ENCODE measurements at regions of chr17 and their contacts with region 1.

Region 1: DNA sequence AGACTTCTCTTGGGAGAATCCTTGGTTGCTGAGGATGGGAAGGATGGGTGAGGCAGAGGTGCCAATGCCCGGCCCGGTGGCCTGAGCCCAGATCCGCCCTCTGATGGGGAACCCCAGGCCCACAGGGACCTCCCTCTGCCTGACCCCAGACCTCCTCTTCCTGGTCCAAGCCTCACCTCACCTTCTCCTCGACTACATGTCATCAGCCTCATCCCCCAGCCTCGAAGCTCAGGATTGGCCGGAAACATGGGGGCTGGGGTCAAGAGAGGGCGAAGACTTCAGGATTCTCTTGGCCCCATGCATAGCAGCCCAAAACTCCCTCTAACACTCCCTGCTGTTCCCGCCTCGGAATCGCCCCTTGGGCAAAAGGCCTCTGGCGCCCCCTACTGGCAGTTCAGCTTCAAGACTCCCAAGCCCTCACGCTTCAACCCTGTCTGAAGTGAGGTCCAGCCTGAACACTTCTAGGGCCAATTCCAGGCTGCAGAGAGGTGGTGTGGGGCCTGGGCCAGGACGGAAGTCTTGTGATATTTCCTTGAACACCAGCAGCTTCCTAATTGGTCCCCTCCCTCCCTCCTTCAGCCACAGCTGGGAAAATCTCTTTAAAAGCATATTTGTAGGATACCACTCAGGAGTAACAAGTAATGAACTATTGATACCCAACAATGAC is 47.2 kb downstream of the ARHGAP27 start:
- DNase-seq: peak; percentile 93 to 95
- H3K4me3 ChIP-seq: no peak overlapping the region
- H3K27ac ChIP-seq: peak overlapping the region; percentile 12 to 68 (median 55)
- H3K4me1 ChIP-seq: peaks cover 15 to 37% (median 26%) of the 10 kb centered on the region in 4 donors
- H3K27me3 ChIP-seq: peaks cover 0 to 12% (median 0%) of the 10 kb centered on the region in 3 donors
- CTCF ChIP-seq: peak in 5 of 7 experiments; percentile 89 to 98 (median 98)
- EP300 ChIP-seq: no peak
- POLR2A ChIP-seq: no peak

Region 2: GRCh38 chr17:45221066-45221996 is 164.1 kb before region 1 on chr17 and contains the start of gene FMNL1:
- intact Hi-C with region 1: loop called (anchors 5 kb)
- DNase-seq: peak; percentile 68 to 73
- H3K4me3 ChIP-seq: peak within 1 kb of the TSS; percentile 56 to 79 (median 64)
- H3K27ac ChIP-seq: peak within 1 kb of the TSS; percentile 42 to 93 (median 85)
- H3K4me1 ChIP-seq: peaks cover 14 to 46% (median 27%) of the 10 kb centered on the region in 4 donors
- H3K27me3 ChIP-seq: peaks cover 0 to 29% (median 10%) of the 10 kb centered on the region in 3 donors
- CTCF ChIP-seq: no peak
- EP300 ChIP-seq: no peak
- POLR2A ChIP-seq: no peak
- total RNA-seq, gene FMNL1: 8.1 to 34.5 (median 16.5) TPM

Region 3: DNA sequence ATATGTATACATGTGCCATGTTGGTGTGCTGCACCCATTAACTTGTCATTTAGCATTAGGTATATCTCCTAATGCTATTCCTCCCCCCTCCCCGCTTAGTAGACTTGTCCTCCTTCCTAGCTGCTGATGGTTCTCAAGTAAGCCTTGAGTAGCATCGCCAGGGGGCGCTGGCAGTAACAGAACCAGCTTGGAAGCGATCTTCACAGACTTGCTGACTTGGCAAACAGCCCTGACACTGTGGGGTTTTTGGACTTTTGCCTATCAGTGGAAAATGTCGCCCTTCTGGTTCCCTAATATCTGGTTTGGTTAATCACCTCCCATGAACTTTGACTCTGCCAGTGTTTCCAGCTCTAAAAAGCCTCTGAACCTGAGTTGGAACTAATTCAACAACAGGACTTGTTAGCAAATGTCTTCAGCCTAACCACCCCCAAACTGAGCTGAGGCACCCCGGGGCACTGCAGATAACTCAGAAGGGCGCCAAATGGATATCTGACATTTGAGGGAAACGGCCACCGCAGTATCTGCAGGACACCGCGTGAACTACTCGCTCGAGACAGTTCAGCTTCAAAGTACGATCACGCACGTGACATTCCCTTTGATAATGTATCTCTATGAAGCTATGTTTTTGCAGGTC is 108.1 kb before region 1 on chr17:
- intact Hi-C with region 1: loop called (anchors 5 kb)
- DNase-seq: peak; percentile 97 to 99
- H3K4me3 ChIP-seq: no peak overlapping the region
- H3K27ac ChIP-seq: peak overlapping the region; percentile 73 to 85 (median 81)
- H3K4me1 ChIP-seq: peaks cover 11 to 46% (median 31%) of the 10 kb centered on the region in 4 donors
- H3K27me3 ChIP-seq: no peaks in the 10 kb centered on the region
- CTCF ChIP-seq: peak in 6 of 7 experiments; percentile 45 to 97 (median 80)
- EP300 ChIP-seq: no peak
- POLR2A ChIP-seq: no peak

Region 4: DNA sequence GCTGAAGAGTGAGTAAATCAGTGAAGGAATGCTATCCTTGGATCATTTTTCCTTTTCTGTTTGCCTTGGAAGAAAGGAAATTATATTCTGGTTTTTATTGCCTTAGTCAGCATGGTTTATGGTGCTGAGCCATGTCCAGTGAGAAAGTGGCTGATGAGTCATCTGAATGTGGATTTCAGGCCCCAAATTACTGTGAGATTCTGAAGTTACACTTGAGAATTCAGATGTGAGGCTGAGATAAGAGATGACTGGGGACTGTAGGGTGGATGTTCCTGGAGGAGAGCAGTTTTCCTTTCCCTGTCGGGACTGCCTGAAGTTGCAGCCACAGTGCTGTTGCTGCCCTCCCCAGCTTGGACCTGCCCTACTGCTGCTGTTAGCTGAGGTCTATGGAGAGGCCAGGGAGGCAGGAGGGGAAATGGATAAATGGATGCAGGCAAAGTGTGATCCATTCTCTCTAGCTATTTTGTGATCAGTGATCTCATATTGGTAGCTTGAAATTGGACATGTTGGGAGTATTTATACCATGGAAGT is 64.5 kb before region 1 on chr17:
- intact Hi-C with region 1: loop called (anchors 10 kb)
- DNase-seq: no peak
- H3K4me3 ChIP-seq: no peak overlapping the region
- H3K27ac ChIP-seq: peak overlapping the region in 3 of 5 donors; percentile 44 to 53 (median 51)
- H3K4me1 ChIP-seq: peaks cover 24 to 44% (median 35%) of the 10 kb centered on the region in 4 donors
- H3K27me3 ChIP-seq: no peaks in the 10 kb centered on the region
- CTCF ChIP-seq: no peak
- EP300 ChIP-seq: no peak
- POLR2A ChIP-seq: no peak